Mammary epithelial cell (primary cell): ENCODE measurements at regions of chr18 and their contacts with region 1.

Region 1: DNA sequence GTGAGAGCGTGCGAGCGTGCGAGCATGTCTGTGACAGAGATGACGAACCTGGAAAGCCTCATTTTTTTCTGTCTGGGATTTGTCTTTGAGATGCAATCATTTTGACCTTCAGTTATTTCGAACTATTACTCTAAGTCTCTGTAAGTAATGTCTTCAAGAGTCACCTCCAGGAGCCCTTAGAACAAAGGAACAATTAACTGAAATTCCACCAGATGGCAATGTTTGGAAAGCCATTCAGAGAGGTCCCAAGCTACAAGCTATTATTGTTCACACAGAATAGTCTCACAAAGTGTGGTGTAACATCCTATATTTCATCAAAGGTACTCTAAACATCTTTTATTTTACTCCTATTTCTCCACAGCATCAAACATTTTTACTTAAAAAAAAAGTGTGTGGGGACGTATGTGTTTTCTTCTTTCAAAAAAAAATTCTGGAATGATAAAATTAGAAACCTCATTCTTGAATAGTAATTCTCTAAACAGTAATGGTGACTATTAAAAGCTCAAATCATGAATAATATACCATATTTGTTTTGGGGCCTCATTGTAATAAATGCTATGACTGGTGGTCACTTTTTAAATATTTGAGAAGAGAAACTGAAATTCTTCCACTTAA is 35.1 kb upstream of the MAPRE2 start:
- DNase-seq: peak; percentile 52
- H3K4me3 ChIP-seq: no peak overlapping the region
- H3K27ac ChIP-seq: no peak overlapping the region
- H3K4me1 ChIP-seq: no peaks in the 10 kb centered on the region
- H3K27me3 ChIP-seq: peaks cover 2% of the 10 kb centered on the region
- CTCF ChIP-seq: peak; percentile 51 to 64

Region 2: DNA sequence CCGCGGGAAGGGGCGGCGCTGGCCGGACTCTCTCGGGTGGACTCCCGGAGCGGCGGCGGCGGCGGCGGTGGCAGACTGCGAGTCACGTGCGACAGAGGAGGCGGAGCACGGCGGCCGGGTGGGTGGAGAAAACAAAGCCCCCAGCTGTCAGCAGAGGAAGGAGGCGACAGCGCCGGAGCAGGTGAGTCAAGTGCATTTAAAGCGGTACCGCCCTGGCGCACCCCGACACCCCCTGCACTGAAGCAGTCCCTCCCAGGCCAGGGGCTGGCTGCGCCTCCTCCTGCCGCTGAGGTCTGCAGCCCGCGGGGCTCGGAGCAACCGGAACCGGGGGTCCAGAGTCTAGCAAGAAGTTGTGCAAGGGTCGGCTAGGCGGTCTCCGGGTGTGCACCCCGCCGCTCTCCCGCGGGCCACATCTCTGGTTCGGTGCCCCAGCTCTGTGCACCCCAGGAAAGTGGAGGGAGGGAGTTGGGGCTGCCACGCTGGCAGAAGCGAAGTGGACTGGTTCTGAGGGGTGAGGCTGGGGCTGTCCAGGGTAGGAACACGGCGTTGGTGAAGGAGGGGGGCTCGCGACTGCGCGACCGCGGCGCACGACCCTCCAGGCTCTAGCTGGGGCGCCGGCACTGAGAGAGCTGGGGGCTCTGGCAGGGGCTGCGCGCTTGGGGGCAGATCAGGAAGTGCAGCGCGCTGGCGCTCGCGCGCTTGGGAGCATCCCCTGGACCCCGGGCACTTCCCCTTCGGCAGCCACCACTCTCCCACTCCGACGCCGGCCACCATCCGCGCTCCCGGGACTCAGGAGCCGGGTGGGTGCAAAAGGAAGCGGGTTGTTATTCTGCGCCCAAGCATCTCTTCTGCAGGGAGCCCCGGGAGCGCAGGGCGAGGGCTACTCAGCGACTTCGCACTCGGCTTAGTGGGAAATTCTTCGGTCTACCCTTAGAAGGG is 28.9 kb before region 1 on chr18:
- CTCF ChIA-PET with region 1: no interaction called
- dilution Hi-C with region 1: no loop called
- in situ Hi-C with region 1: no loop called
- intact Hi-C with region 1: no loop called
- DNase-seq: no peak
- H3K4me3 ChIP-seq: peak overlapping the region; percentile 36 to 53 (median 52)
- H3K27ac ChIP-seq: no peak overlapping the region
- H3K4me1 ChIP-seq: peaks cover 28% of the 10 kb centered on the region
- H3K27me3 ChIP-seq: peaks cover 17% of the 10 kb centered on the region
- CTCF ChIP-seq: no peak

Region 3: GRCh38 chr18:35355140-35355618 is 349.1 kb after region 1 on chr18:
- CTCF ChIA-PET with region 1: interaction called, 11 read pairs
- dilution Hi-C with region 1: no loop called
- in situ Hi-C with region 1: no loop called
- intact Hi-C with region 1: no loop called
- DNase-seq: peak; percentile 68
- H3K4me3 ChIP-seq: no peak overlapping the region
- H3K27ac ChIP-seq: no peak overlapping the region
- H3K4me1 ChIP-seq: no peaks in the 10 kb centered on the region
- H3K27me3 ChIP-seq: no peaks in the 10 kb centered on the region
- CTCF ChIP-seq: peak; percentile 71 to 80